ENCODE measurements at regions of chr6 and their contacts with region 1.

Region 1: GRCh38 chr6:7145885-7146828 is 38.4 kb downstream of the RREB1 start:
- DNase-seq: peak; percentile 77
- H3K4me3 Mint-ChIP-seq: peak overlapping the region; percentile 67
- H3K27ac Mint-ChIP-seq: peak overlapping the region; percentile 85
- H3K4me1 Mint-ChIP-seq: peaks cover 55% of the 10 kb centered on the region
- H3K27me3 Mint-ChIP-seq: no peaks in the 10 kb centered on the region

Region 2: GRCh38 chr6:7016226-7016625 is 129.9 kb before region 1 on chr6:
- intact Hi-C with region 1: no loop called
- DNase-seq: no peak
- H3K4me3 Mint-ChIP-seq: no peak overlapping the region
- H3K27ac Mint-ChIP-seq: no peak overlapping the region
- H3K4me1 Mint-ChIP-seq: no peaks in the 10 kb centered on the region
- H3K27me3 Mint-ChIP-seq: peaks cover 20% of the 10 kb centered on the region

Region 3: GRCh38 chr6:7156643-7157278 is 10.6 kb after region 1 on chr6:
- intact Hi-C with region 1: no loop called
- DNase-seq: no peak
- H3K4me3 Mint-ChIP-seq: no peak overlapping the region
- H3K27ac Mint-ChIP-seq: no peak overlapping the region
- H3K4me1 Mint-ChIP-seq: peaks cover 32% of the 10 kb centered on the region
- H3K27me3 Mint-ChIP-seq: no peaks in the 10 kb centered on the region

Region 4: GRCh38 chr6:7188492-7188891 is 42.3 kb after region 1 on chr6:
- intact Hi-C with region 1: loop called (anchors 5 kb)
- DNase-seq: no peak
- H3K4me3 Mint-ChIP-seq: no peak overlapping the region
- H3K27ac Mint-ChIP-seq: peak overlapping the region; percentile 3
- H3K4me1 Mint-ChIP-seq: peaks cover 4% of the 10 kb centered on the region
- H3K27me3 Mint-ChIP-seq: no peaks in the 10 kb centered on the region

Region 5: GRCh38 chr6:7198833-7199800 is 53.0 kb after region 1 on chr6:
- intact Hi-C with region 1: no loop called
- DNase-seq: no peak
- H3K4me3 Mint-ChIP-seq: no peak overlapping the region
- H3K27ac Mint-ChIP-seq: no peak overlapping the region
- H3K4me1 Mint-ChIP-seq: peaks cover 26% of the 10 kb centered on the region
- H3K27me3 Mint-ChIP-seq: no peaks in the 10 kb centered on the region